ENCODE measurements at regions of chr6 and their contacts with region 1.

Region 1: DNA sequence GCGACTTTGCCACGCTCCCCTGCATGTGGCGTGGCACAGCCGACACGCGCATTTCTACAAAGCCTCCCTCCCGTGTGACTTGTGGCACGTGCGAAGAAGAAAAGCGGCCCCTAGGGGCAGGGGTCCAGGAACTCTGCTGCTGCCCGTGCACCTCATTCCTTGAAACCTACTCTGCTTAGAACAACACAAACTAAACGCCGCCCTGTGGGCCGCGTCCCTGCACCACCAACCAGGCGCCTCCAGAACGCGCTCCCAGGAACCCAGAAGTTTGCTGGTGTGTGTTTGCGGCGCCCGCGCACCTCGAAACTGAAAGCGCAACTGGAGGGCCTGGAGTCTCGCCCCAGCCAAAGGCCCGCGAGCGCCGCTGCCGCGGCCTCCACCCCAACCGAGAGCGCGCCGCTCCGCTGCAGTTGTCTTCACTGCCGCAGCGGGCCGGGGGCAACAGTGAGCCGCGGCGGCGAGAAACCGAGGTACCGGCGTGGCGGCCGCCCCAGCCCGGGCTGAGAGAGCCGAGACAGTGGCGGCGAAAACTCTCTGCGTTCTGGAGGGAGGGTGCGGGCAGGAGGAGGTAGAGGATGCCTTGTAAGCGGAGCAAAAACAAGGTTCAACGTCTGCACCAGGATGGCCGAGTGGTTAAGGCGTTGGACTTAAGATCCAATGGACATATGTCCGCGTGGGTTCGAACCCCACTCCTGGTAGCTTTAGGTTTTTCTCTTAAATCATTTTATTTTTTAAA is 65.8 kb downstream of the STX11 start:
- DNase-seq: peak; percentile 94
- H3K4me3 ChIP-seq: peak overlapping the region; percentile 54 to 72 (median 65)
- H3K27ac ChIP-seq: peak overlapping the region; percentile 63
- H3K4me1 ChIP-seq: peaks cover 13% of the 10 kb centered on the region
- H3K27me3 ChIP-seq: no peaks in the 10 kb centered on the region
- CTCF ChIP-seq: peak; percentile 35 to 69

Region 2: GRCh38 chr6:143940011-143940597 is 276.0 kb before region 1 on chr6:
- CTCF ChIA-PET with region 1: no interaction called
- dilution Hi-C with region 1: no loop called
- in situ Hi-C with region 1: no loop called
- intact Hi-C with region 1: loop called (anchors 5 kb)
- DNase-seq: peak; percentile 48
- H3K4me3 ChIP-seq: no peak overlapping the region
- H3K27ac ChIP-seq: no peak overlapping the region
- H3K4me1 ChIP-seq: no peaks in the 10 kb centered on the region
- H3K27me3 ChIP-seq: no peaks in the 10 kb centered on the region
- CTCF ChIP-seq: peak; percentile 88

Region 3: GRCh38 chr6:144095331-144096002 is 120.6 kb before region 1 on chr6 and contains the start of gene SF3B5:
- CTCF ChIA-PET with region 1: no interaction called
- dilution Hi-C with region 1: no loop called
- in situ Hi-C with region 1: loop called (anchors 5 kb)
- intact Hi-C with region 1: no loop called
- DNase-seq: peak; percentile 100
- H3K4me3 ChIP-seq: peak within 1 kb of the TSS; percentile 58 to 91 (median 61)
- H3K27ac ChIP-seq: peak within 1 kb of the TSS; percentile 77
- H3K4me1 ChIP-seq: peaks cover 6% of the 10 kb centered on the region
- H3K27me3 ChIP-seq: no peaks in the 10 kb centered on the region
- CTCF ChIP-seq: no peak
- total RNA-seq, gene SF3B5: 81.9 to 132 TPM

Region 4: DNA sequence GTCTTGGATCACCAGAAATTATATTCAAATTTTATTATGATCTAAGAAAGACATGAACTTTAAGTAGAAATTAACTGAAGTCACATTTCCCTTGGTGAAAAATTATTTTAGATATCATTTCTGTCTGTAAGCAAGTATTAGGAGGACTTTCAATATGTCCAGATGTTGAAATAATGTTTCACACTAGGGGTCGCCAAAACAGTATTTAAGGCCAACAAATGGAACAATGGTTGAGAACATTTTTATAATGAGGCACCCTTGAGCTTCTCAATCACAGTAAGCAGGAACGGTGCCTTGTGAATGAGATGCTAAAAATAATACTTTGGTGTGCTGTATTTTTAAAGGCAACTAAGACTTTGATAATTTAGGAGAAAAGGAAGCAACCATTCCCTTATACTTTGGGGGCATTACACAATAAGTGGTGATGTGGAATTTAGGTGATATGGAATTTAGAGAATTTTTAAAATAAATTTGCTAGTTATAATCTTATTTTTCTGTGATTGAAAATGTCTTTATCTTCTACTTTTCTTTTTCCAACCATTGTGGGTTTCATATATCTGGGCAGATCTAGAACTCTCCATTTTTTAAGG is 111.1 kb before region 1 on chr6:
- CTCF ChIA-PET with region 1: no interaction called
- dilution Hi-C with region 1: no loop called
- in situ Hi-C with region 1: loop called in 1 of 2 experiments (anchors 5 kb)
- intact Hi-C with region 1: loop called (anchors 1 kb)
- DNase-seq: peak; percentile 60
- H3K4me3 ChIP-seq: no peak overlapping the region
- H3K27ac ChIP-seq: no peak overlapping the region
- H3K4me1 ChIP-seq: no peaks in the 10 kb centered on the region
- H3K27me3 ChIP-seq: no peaks in the 10 kb centered on the region
- CTCF ChIP-seq: peak; percentile 57 to 72

Region 5: GRCh38 chr6:144149891-144150709 is 66.0 kb before region 1 on chr6 and contains the start of gene STX11:
- CTCF ChIA-PET with region 1: no interaction called
- dilution Hi-C with region 1: no loop called
- in situ Hi-C with region 1: no loop called
- intact Hi-C with region 1: loop called (anchors 2 kb)
- DNase-seq: peak; percentile 59
- H3K4me3 ChIP-seq: peak within 1 kb of the TSS; percentile 68 to 92 (median 70)
- H3K27ac ChIP-seq: no peak within 1 kb of the TSS
- H3K4me1 ChIP-seq: peaks cover 8% of the 10 kb centered on the region
- H3K27me3 ChIP-seq: no peaks in the 10 kb centered on the region
- CTCF ChIP-seq: no peak
- total RNA-seq, gene STX11: 0.71 to 1.2 TPM

Region 6: GRCh38 chr6:144264270-144265060 is 48.4 kb after region 1 on chr6:
- CTCF ChIA-PET with region 1: no interaction called
- dilution Hi-C with region 1: no loop called
- in situ Hi-C with region 1: no loop called
- intact Hi-C with region 1: loop called (anchors 1 kb)
- DNase-seq: peak; percentile 80
- H3K4me3 ChIP-seq: peak overlapping the region in 1 of 3 experiments; percentile 2
- H3K27ac ChIP-seq: peak overlapping the region; percentile 76
- H3K4me1 ChIP-seq: peaks cover 27% of the 10 kb centered on the region
- H3K27me3 ChIP-seq: no peaks in the 10 kb centered on the region
- CTCF ChIP-seq: no peak

Region 7: GRCh38 chr6:144482142-144482541 is 266.0 kb after region 1 on chr6:
- CTCF ChIA-PET with region 1: interaction called, 7 read pairs
- dilution Hi-C with region 1: no loop called
- in situ Hi-C with region 1: loop called in 1 of 2 experiments (anchors 10 kb)
- intact Hi-C with region 1: loop called (anchors 1 kb)
- DNase-seq: peak; percentile 60
- H3K4me3 ChIP-seq: no peak overlapping the region
- H3K27ac ChIP-seq: no peak overlapping the region
- H3K4me1 ChIP-seq: no peaks in the 10 kb centered on the region
- H3K27me3 ChIP-seq: no peaks in the 10 kb centered on the region
- CTCF ChIP-seq: peak; percentile 77 to 78

Measured in mammary epithelial cell (primary cell).